Stomach (tissue), 19 donors: ENCODE measurements at regions of chr5 and their contacts with region 1.

Region 1: DNA sequence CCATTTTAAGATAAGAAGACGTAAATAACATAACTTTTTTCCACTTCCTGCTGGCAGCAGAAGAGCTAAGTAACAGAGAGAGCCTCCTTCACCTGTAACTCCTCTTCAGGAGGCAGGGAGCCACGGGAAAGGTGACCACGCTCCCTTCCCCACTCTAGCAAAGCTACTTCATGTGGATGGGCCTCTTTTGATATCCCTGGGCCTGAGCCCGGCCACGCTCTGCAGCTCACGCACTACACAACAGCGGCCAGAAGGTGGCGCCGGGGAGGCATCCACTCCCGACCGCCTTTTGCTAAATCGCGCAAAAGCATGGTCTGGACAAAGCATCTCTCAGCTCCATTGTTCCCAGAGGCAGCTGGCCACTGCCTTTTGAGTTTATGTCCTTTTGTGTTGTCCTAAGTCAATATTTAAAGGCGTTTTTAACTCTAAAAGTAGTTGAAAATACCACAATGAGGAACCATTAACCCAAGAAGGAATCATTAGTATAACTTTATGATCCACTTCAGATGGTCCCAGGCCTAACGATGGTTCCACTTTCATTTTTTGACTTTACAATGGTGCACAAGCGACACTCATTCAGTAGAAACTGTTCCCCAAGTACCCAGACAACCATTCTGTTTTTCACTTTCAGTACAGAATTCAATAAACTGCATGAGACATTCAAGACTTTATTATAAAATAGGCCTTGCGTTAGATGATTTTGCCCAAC is 23.6 kb downstream of the CMBL start:
- DNase-seq: peak; percentile 90 to 94
- H3K4me3 ChIP-seq: no peak overlapping the region
- H3K27ac ChIP-seq: no peak overlapping the region
- H3K4me1 ChIP-seq: peaks cover 0 to 20% (median 14%) of the 10 kb centered on the region in 4 donors
- H3K27me3 ChIP-seq: no peaks in the 10 kb centered on the region
- CTCF ChIP-seq: peak in 5 of 7 experiments; percentile 84 to 94 (median 89)
- EP300 ChIP-seq: no peak
- POLR2A ChIP-seq: no peak

Region 2: DNA sequence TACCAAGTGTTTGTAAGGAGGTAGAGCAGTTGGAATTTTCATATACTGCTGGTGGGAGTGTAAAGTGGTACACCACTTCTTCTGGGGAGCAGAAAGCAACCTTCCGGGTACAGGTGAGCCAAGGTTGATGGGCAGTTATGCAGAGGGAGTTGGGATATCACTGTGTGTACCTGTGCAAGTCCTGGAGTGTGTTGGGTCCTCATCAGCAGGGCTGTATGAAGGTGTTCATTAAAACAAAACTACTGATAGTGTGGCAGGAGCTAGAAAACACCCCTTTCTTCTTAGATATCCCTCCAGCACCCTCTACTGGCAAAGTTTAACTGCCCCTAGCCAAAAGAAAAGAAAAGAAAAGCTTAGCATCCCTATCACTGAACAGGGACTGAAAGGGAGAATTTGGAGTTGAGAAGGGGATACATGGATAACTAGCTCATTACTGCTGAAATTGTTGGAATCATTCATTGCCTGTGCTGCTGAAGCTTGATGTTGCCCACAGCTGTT is 80.2 kb after region 1 on chr5:
- intact Hi-C with region 1: loop called (anchors 10 kb)
- DNase-seq: no peak
- H3K4me3 ChIP-seq: no peak overlapping the region
- H3K27ac ChIP-seq: no peak overlapping the region
- H3K4me1 ChIP-seq: peaks cover 27 to 89% (median 54%) of the 10 kb centered on the region in 4 donors
- H3K27me3 ChIP-seq: no peaks in the 10 kb centered on the region
- CTCF ChIP-seq: peak in 3 of 7 experiments; percentile 10 to 22 (median 22)
- EP300 ChIP-seq: no peak
- POLR2A ChIP-seq: no peak

Region 3: GRCh38 chr5:10424124-10424731 is 140.1 kb after region 1 on chr5:
- intact Hi-C with region 1: loop called (anchors 10 kb)
- DNase-seq: peak in 1 of 2 donors; percentile 72
- H3K4me3 ChIP-seq: no peak overlapping the region
- H3K27ac ChIP-seq: no peak overlapping the region
- H3K4me1 ChIP-seq: peaks cover 0 to 17% (median 0%) of the 10 kb centered on the region in 4 donors
- H3K27me3 ChIP-seq: no peaks in the 10 kb centered on the region
- CTCF ChIP-seq: peak in 2 of 7 experiments; percentile 19 to 32
- EP300 ChIP-seq: no peak
- POLR2A ChIP-seq: no peak